ENCODE measurements at regions of chr6 and their contacts with region 1.

Region 1: DNA sequence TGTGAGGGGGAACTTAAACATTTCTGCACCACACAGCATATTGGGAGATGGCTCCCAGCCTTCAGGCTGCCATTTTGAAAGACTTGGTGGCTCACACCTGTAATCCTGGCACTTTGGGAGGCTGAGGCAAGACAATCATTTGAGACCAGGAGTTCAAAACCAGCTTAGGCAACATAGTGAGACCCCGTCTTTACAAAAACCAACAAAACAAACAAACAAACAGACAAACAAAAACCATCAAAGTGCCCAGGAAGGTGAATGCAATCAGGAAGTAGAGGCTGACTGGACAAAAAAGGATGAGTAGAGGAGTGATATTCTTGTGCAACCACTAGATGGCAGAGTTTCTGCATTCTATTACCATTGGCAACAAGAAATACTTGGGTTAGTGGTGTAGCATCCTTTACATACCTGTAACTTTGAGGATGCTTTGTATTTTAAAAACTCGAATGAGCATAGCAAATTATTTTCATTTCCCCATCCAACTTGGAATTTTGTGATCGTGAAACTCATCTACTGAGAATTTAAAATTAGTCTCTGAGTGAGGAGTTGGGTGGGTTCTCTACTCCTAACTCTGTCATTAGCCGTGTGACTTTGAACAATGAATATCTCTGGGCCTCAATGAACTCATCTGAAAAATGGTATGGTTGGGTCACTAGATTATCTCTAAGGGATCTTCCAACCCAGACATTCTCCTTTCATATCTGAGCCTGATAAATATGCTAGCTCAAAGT is 84.4 kb downstream of the CRYBG1 start:
- DNase-seq: peak; percentile 85
- H3K4me3 ChIP-seq: no peak overlapping the region
- H3K27ac ChIP-seq: no peak overlapping the region
- H3K4me1 ChIP-seq: no peaks in the 10 kb centered on the region
- CTCF ChIP-seq: peak; percentile 94

Region 2: GRCh38 chr6:105484238-105485161 is 960.4 kb before region 1 on chr6:
- CTCF ChIA-PET with region 1: no interaction called
- POLR2A ChIA-PET with region 1: no interaction called
- intact Hi-C with region 1: loop called (anchors 10 kb)
- DNase-seq: peak; percentile 50
- H3K4me3 ChIP-seq: no peak overlapping the region
- H3K27ac ChIP-seq: no peak overlapping the region
- H3K4me1 ChIP-seq: peaks cover 5% of the 10 kb centered on the region
- CTCF ChIP-seq: peak; percentile 98

Region 3: DNA sequence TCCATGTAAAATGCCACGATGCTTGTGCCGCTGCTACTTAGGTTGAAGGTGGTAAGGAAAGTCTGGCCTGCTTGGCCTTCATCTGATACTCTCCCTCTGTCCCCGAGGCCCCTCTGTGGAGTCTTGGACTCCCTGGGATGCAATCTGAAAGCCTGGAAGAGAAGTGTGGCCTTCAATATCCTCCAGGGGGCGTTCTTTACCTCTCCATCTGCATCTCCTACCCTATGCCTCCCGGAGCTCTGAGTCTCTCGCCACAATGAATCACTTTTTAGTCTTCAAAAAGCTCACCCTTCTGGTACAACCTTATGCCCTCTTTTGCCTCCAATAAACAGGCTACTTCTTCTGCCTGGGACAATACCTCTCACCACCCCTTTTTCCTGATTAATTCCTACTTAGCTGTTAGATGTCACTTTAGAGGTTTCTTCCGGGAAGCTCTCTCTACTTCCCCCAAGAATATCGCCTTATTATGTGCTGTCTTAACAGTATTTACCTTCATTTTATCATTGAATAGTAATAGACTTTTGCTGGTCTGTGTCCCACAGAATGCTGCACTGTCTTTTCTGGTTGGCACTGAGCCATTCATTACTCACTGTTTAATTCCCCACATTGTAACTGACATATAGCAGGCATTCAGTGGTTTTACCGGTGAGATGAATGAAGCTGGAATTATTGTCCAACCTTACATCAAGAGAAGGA is 105.5 kb before region 1 on chr6:
- CTCF ChIA-PET with region 1: interaction called, 3 read pairs
- POLR2A ChIA-PET with region 1: interaction called, 4 read pairs
- intact Hi-C with region 1: loop called (anchors 1 kb)
- DNase-seq: peak; percentile 65
- H3K4me3 ChIP-seq: no peak overlapping the region
- H3K27ac ChIP-seq: no peak overlapping the region
- H3K4me1 ChIP-seq: no peaks in the 10 kb centered on the region
- CTCF ChIP-seq: peak; percentile 86

Region 4: GRCh38 chr6:106411643-106412200 is 33.2 kb before region 1 on chr6:
- CTCF ChIA-PET with region 1: no interaction called
- POLR2A ChIA-PET with region 1: no interaction called
- intact Hi-C with region 1: no loop called
- DNase-seq: no peak
- H3K4me3 ChIP-seq: no peak overlapping the region
- H3K27ac ChIP-seq: no peak overlapping the region
- H3K4me1 ChIP-seq: no peaks in the 10 kb centered on the region
- CTCF ChIP-seq: no peak

Region 5: GRCh38 chr6:106556368-106556960 is 111.5 kb after region 1 on chr6:
- CTCF ChIA-PET with region 1: no interaction called
- POLR2A ChIA-PET with region 1: no interaction called
- intact Hi-C with region 1: loop called (anchors 1 kb)
- DNase-seq: peak; percentile 56
- H3K4me3 ChIP-seq: no peak overlapping the region
- H3K27ac ChIP-seq: no peak overlapping the region
- H3K4me1 ChIP-seq: no peaks in the 10 kb centered on the region
- CTCF ChIP-seq: peak; percentile 91

Region 6: DNA sequence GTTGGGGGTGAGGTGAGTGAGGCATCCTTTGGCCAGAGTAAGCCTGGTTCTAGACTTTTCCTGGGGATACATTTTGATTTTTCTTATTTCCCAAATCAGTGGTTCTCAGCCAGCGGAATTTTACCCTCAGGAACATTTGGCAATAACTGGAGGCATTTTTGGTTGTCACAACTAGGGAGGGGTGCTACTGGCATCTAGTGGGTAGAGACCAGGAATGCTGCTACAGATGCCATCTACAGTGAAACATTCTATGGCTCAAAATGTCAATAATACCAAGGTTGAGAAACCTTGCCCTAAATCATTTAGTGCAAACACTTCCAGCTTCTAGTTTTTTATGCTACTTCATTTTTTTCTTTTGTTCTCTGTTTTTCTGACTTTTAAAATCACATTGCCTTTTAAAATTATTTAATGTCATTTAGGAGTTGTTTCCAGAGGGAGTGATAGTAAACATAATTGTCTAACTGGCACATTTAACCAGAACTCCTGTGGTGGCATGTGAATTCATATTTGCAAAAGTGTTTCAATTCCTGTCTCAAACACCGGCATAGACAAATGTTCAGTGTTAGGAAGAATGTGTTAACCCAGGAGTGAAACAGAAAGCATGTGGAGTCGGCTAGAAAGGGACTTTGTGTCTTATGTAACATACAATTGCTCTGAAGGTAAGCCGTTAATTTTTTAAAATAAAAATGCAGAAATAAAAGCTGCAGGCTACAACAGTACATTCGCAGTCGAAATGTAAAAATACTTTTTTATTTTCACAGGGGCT is 243.4 kb after region 1 on chr6:
- CTCF ChIA-PET with region 1: no interaction called
- POLR2A ChIA-PET with region 1: no interaction called
- intact Hi-C with region 1: loop called (anchors 5 kb)
- DNase-seq: peak; percentile 59
- H3K4me3 ChIP-seq: no peak overlapping the region
- H3K27ac ChIP-seq: no peak overlapping the region
- H3K4me1 ChIP-seq: peaks cover 47% of the 10 kb centered on the region
- CTCF ChIP-seq: peak; percentile 79

Region 7: DNA sequence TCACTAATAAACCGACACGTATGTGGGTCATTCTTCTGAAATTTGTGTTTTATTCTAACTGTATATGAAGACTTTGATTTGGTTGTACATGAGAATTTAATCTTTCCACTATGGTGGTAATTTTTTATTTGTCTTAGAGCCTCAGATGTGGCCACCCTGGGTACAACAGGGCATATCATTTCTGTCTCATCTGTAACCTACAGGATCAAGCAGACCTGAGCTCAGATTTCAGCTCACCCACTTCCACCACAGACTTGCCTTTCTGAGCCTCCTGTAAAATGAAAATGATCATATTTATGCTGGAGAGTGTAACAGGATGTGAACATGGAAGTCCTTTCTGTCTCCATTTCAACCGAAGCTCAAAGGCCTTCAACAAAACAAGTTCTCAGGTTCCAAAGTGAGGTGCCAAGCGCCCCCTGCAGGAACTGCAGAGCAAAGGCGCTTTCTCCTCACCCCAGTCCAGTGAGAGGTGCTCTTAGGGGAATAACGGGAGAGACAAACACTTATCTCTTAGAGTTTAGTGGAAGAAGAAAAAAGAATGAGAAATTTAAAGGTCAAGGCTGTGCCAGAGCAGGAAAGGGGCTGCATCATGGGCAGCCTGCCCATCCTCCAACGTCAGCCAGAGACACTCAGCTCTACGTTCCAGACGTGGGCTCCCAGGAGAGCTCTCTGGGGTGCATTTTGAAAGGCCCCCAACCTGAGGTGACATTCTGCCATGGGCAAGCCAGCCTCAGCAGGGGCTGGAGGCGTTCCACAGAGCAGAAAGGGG is 552.6 kb after region 1 on chr6:
- CTCF ChIA-PET with region 1: interaction called, 5 read pairs
- POLR2A ChIA-PET with region 1: no interaction called
- intact Hi-C with region 1: loop called (anchors 1 kb)
- DNase-seq: peak; percentile 87
- H3K4me3 ChIP-seq: no peak overlapping the region
- H3K27ac ChIP-seq: no peak overlapping the region
- H3K4me1 ChIP-seq: peaks cover 4% of the 10 kb centered on the region
- CTCF ChIP-seq: peak; percentile 99

Measured in OCI-LY7 (cell line).